ENCODE measurements at regions of chr12 and their contacts with region 1.

Region 1: DNA sequence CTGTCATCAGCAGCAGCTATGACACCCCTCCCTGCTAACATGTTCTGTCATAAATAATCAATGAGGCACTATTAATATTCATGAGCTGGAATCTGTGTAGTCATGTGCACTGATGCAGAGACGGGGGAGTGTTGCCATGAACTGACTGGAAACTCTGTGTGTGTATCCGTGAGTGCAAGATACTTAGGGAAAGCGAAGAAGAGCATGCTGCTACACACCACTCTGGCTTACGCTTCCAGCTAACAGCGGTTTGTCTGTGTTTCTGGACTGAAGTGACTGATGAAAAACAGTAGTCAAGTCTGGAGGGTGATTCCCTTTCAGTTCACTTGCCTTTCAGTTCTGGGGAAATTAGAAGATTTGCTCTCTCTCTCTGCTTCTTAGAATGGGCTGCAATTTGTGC is 249.4 kb downstream of the PDZRN4 start:
- DNase-seq: peak; percentile 60
- H3K4me3 ChIP-seq: peak overlapping the region; percentile 72
- H3K27ac ChIP-seq: peak overlapping the region; percentile 93
- H3K4me1 ChIP-seq: peaks cover 64% of the 10 kb centered on the region
- CTCF ChIP-seq: no peak

Region 2: GRCh38 chr12:41452838-41453407 is 15.4 kb after region 1 on chr12:
- CTCF ChIA-PET with region 1: no interaction called
- POLR2A ChIA-PET with region 1: interaction called, 26 read pairs
- intact Hi-C with region 1: no loop called
- DNase-seq: no peak
- H3K4me3 ChIP-seq: no peak overlapping the region
- H3K27ac ChIP-seq: no peak overlapping the region
- H3K4me1 ChIP-seq: peaks cover 14% of the 10 kb centered on the region
- CTCF ChIP-seq: no peak

Region 3: GRCh38 chr12:41619705-41620104 is 182.1 kb after region 1 on chr12:
- CTCF ChIA-PET with region 1: no interaction called
- POLR2A ChIA-PET with region 1: no interaction called
- intact Hi-C with region 1: loop called (anchors 5 kb)
- DNase-seq: no peak
- H3K4me3 ChIP-seq: no peak overlapping the region
- H3K27ac ChIP-seq: no peak overlapping the region
- H3K4me1 ChIP-seq: no peaks in the 10 kb centered on the region
- CTCF ChIP-seq: no peak

Region 4: DNA sequence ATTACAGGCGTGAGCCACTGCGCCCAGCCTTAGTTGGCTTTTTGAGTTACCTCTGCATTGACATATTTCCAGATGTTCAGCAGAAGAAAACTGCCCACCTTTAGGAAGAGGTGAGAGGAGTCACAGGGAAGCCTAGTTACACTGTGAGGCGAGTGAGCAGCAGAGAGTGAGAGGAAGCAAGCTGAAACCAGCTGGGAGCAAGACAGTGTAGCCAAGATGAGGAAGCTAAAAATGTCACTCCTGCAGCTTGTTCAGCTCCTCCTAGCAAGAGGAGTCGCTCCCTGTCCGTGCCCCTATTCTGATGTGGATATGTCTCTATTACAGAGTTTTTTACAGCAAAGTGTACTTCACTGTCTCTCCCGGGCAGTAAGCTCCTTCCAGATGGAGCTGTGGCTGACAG is 579.5 kb after region 1 on chr12:
- CTCF ChIA-PET with region 1: no interaction called
- POLR2A ChIA-PET with region 1: interaction called, 6 read pairs
- intact Hi-C with region 1: loop called (anchors 2 kb)
- DNase-seq: peak; percentile 77
- H3K4me3 ChIP-seq: peak overlapping the region; percentile 14
- H3K27ac ChIP-seq: peak overlapping the region; percentile 87
- H3K4me1 ChIP-seq: peaks cover 87% of the 10 kb centered on the region
- CTCF ChIP-seq: no peak

Region 5: GRCh38 chr12:42237052-42237852 is 799.7 kb after region 1 on chr12:
- CTCF ChIA-PET with region 1: no interaction called
- POLR2A ChIA-PET with region 1: interaction called, 3 read pairs
- intact Hi-C with region 1: loop called (anchors 10 kb)
- DNase-seq: peak; percentile 90
- H3K4me3 ChIP-seq: peak overlapping the region; percentile 79
- H3K27ac ChIP-seq: peak overlapping the region; percentile 61
- H3K4me1 ChIP-seq: peaks cover 24% of the 10 kb centered on the region
- CTCF ChIP-seq: peak; percentile 67